Right ventricle myocardium superior (tissue), 1 donor: ENCODE measurements at regions of chr1 and their contacts with region 1.

Region 1: GRCh38 chr1:43763497-43763973 is 56.2 kb downstream of the ST3GAL3 start:
- DNase-seq: peak; percentile 42
- ATAC-seq: peak; percentile 96

Region 2: GRCh38 chr1:43934101-43934985 is 170.8 kb after region 1 on chr1:
- intact Hi-C with region 1: loop called (anchors 2 kb)
- DNase-seq: peak; percentile 74
- ATAC-seq: peak; percentile 62

Region 3: DNA sequence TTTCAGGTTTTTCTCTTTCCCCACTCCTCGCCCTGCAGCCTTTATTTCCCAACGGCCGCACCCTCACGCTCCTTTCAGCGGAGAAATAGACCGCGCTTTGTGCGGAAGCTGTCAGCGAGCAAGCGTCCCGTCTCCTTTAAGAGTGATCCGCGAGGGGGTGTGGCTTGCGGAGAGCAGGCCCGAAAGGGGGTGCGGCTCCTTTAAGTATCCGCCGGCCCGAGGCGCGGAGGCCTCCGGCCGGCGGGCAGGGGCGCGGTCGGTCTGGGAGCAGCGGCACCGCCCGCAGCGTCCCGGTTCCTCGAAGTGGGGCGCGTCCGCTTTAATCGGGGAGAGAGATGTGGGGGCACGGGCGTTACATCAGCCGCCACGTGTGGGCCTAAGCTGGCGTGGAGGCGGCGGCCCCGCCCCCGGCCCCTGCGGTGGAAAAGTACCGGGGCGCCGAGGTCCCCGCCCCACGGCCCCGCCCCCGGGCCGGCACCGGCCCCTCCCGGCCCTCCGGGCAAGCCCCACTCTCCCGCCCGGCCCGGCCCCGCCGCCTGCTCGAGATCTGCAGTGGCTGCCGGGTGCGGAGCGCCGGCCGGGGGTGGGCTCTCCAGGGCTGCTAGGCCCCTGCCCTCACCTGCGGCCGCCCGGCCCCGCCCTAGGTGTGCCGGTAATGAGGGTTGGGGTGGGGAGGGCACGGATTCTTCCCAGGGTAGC is 266.5 kb after region 1 on chr1:
- intact Hi-C with region 1: loop called (anchors 10 kb)
- DNase-seq: peak; percentile 94
- ATAC-seq: peak; percentile 96